ENCODE measurements at regions of chr1 and their contacts with region 1.

Region 1: DNA sequence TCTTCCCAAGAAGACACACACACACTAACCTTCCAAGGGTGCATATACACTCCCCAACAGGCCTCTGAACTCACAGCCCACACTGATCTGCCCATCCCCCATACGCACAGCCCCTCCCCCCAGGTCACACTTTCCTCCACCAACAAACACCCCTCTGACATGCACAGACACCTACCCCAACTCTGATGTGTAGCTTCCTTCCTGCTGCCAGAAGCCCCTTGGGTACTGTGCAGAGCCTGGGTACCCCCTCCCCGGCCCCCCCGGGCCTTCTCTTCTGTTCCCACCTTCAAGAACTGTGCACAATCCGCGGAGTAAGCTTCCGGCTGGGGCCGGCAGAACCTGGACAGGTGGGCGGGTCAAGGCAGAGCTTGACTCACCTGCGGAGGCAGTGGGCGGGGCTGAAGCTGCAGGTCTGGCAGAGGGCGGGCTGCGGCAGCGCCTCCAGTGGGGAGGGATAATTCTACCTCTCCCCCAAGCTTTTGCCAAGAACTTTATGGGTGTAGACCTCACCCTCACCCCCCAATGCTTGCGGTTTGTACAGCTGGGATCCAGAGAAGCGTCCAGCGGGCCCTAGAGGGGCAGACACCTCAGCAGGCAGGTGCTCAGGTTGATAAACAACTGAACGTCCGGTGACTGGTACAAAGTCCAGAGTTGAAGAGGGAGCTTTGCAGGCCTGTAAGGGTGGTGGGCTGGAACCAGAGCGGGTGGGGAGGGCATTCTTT is at the start of gene C1orf210:
- DNase-seq: peak; percentile 91 to 97
- H3K4me3 ChIP-seq: peak within 1 kb of the TSS; percentile 71
- H3K27ac ChIP-seq: peak within 1 kb of the TSS; percentile 21
- H3K4me1 ChIP-seq: peaks cover 22% of the 10 kb centered on the region
- H3K27me3 ChIP-seq: no peaks in the 10 kb centered on the region
- CTCF ChIP-seq: peak; percentile 70
- total RNA-seq, gene C1orf210: 23.3 and 29.3 TPM in 2 replicates

Region 2: GRCh38 chr1:43008115-43009060 is 277.0 kb before region 1 on chr1:
- CTCF ChIA-PET with region 1: interaction called, 11 read pairs
- POLR2A ChIA-PET with region 1: no interaction called
- intact Hi-C with region 1: no loop called
- DNase-seq: peak in 1 of 2 experiments; percentile 74
- H3K4me3 ChIP-seq: no peak overlapping the region
- H3K27ac ChIP-seq: no peak overlapping the region
- H3K4me1 ChIP-seq: peaks cover 22% of the 10 kb centered on the region
- H3K27me3 ChIP-seq: no peaks in the 10 kb centered on the region
- CTCF ChIP-seq: no peak

Region 3: DNA sequence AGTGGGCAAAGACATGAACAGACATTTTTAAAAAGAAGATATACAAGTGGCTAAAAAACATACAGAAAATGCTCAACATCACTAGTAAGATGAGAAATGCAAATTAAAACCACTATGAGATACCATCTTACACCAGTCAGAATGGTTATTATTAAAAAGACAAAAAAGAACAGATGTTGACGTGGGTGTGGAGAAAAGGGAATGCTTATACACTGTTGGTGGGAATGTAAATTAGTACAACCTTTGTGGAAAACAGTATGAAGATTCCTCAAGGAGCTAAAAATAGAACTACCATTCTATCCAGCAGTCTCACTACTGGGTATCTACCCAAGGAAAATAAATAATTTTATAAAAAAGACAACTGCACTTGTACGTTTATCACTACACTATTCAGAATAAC is 187.2 kb before region 1 on chr1:
- CTCF ChIA-PET with region 1: no interaction called
- POLR2A ChIA-PET with region 1: no interaction called
- intact Hi-C with region 1: no loop called
- DNase-seq: no peak
- H3K4me3 ChIP-seq: no peak overlapping the region
- H3K27ac ChIP-seq: no peak overlapping the region
- H3K4me1 ChIP-seq: no peaks in the 10 kb centered on the region
- H3K27me3 ChIP-seq: no peaks in the 10 kb centered on the region
- CTCF ChIP-seq: no peak

Region 4: GRCh38 chr1:43270413-43271095 is 14.9 kb before region 1 on chr1:
- CTCF ChIA-PET with region 1: no interaction called
- POLR2A ChIA-PET with region 1: interaction called, 16 read pairs
- intact Hi-C with region 1: no loop called
- DNase-seq: peak; percentile 94 to 96
- H3K4me3 ChIP-seq: peak overlapping the region; percentile 59
- H3K27ac ChIP-seq: peak overlapping the region; percentile 81
- H3K4me1 ChIP-seq: peaks cover 25% of the 10 kb centered on the region
- H3K27me3 ChIP-seq: no peaks in the 10 kb centered on the region
- CTCF ChIP-seq: no peak

Region 5: GRCh38 chr1:43329995-43330751 is 44.7 kb after region 1 on chr1:
- CTCF ChIA-PET with region 1: interaction called, 14 read pairs
- POLR2A ChIA-PET with region 1: interaction called, 7 read pairs
- intact Hi-C with region 1: no loop called
- DNase-seq: peak; percentile 61 to 77
- H3K4me3 ChIP-seq: no peak overlapping the region
- H3K27ac ChIP-seq: peak overlapping the region; percentile 23; the same call in 1 of the 2 replicates
- H3K4me1 ChIP-seq: peaks cover 15% of the 10 kb centered on the region
- H3K27me3 ChIP-seq: no peaks in the 10 kb centered on the region
- CTCF ChIP-seq: no peak

Region 6: DNA sequence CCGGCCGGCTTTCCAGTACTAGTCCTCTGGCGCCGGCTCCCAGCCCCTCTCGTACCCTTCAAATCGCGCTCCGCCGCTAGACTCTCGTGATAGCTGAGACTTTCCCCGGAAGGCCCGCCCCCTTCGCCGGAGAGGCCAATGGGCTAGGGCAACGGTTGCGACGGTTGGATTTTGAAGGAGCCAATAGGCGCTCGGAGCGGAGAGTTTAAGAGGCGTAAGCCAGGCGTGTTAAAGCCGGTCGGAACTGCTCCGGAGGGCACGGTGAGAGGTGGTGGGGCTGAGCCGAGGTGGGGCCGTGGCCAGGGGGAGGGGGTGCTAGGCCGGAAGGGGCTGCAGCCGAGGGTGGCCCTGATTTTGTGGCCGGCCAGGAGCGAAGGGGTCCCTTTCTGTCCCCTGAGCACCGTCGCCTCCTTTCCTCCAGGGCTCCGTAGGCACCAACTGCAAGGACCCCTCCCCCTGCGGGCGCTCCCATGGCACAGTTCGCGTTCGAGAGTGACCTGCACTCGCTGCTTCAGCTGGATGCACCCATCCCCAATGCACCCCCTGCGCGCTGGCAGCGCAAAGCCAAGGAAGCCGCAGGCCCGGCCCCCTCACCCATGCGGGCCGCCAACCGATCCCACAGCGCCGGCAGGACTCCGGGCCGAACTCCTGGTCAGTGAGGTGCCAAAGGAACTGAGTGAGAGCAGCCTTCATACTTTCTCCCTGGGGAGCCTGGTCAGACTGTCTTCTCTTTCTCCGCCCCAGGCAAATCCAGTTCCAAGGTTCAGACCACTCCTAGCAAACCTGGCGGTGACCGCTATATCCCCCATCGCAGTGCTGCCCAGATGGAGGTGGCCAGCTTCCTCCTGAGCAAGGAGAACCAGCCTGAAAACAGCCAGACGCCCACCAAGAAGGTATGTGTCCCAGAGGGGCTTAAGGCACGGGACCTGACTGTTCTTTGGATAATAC is 73.6 kb after region 1 on chr1 and contains the start of gene CDC20:
- CTCF ChIA-PET with region 1: interaction called, 10 read pairs
- POLR2A ChIA-PET with region 1: interaction called, 6 read pairs
- intact Hi-C with region 1: loop called (anchors 2 kb)
- DNase-seq: peak; percentile 95 to 99
- H3K4me3 ChIP-seq: peak within 1 kb of the TSS; percentile 86
- H3K27ac ChIP-seq: peak within 1 kb of the TSS; percentile 83
- H3K4me1 ChIP-seq: peaks cover 47% of the 10 kb centered on the region
- H3K27me3 ChIP-seq: no peaks in the 10 kb centered on the region
- CTCF ChIP-seq: no peak
- total RNA-seq, gene CDC20: 180 and 229 TPM in 2 replicates

Region 7: GRCh38 chr1:43383449-43383848 is 98.0 kb after region 1 on chr1:
- CTCF ChIA-PET with region 1: interaction called, 5 read pairs
- POLR2A ChIA-PET with region 1: interaction called, 12 read pairs
- intact Hi-C with region 1: no loop called
- DNase-seq: peak in 1 of 2 experiments; percentile 33
- H3K4me3 ChIP-seq: no peak overlapping the region
- H3K27ac ChIP-seq: no peak overlapping the region
- H3K4me1 ChIP-seq: peaks cover 12% of the 10 kb centered on the region
- H3K27me3 ChIP-seq: no peaks in the 10 kb centered on the region
- CTCF ChIP-seq: peak; percentile 55; the same call in 1 of the 2 replicates

Measured in PC-9 (cell line).